ENCODE measurements at regions of chr12 and their contacts with region 1.

Region 1: GRCh38 chr12:49967042-49967776 is 5.5 kb downstream of the AQP5 start:
- DNase-seq: peak; percentile 90 to 99 (median 96)

Region 2: DNA sequence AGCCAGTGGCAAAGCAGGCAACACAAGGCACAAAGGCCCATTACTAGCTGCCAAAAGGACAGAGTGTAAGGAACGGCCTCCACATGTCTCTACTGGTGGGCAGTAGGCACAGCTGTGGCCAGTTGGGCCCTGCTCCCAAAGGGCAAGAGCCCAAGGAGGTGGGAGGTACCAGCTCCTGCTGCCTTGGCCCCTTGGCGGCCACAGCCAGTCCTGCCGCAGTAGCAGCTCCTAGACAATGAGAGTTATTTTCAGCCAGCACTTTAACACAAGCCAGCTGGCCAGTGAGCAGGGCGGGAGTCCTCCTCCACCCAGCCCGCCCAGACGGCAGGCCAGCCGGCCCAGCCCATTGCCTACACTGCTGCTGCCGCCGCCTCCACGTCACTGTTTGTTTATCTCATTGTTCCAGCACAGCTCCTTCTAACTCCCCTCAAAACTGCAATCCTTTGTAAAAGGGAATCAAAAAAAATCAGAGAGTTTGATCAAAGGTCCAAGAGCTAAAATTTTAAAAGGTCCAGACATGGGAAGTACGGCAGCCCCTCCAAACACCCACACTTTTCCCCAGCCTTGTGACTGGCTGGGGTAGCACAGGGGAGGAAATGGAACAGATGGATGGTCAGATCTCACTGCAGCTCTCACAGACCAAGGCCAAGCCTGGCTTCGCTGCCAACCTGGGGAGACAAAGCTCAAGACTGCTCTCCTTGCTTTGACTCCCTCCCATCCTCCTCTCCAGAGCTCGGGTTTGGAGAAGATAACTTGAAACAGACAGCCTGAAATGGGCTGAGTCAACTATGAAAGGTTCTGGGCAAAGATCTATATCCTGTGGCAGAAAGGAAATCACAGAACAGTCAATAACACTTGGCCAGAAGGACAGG is 293.5 kb before region 1 on chr12:
- intact Hi-C with region 1: no loop called
- DNase-seq: peak; percentile 83 to 98 (median 94)

Region 3: DNA sequence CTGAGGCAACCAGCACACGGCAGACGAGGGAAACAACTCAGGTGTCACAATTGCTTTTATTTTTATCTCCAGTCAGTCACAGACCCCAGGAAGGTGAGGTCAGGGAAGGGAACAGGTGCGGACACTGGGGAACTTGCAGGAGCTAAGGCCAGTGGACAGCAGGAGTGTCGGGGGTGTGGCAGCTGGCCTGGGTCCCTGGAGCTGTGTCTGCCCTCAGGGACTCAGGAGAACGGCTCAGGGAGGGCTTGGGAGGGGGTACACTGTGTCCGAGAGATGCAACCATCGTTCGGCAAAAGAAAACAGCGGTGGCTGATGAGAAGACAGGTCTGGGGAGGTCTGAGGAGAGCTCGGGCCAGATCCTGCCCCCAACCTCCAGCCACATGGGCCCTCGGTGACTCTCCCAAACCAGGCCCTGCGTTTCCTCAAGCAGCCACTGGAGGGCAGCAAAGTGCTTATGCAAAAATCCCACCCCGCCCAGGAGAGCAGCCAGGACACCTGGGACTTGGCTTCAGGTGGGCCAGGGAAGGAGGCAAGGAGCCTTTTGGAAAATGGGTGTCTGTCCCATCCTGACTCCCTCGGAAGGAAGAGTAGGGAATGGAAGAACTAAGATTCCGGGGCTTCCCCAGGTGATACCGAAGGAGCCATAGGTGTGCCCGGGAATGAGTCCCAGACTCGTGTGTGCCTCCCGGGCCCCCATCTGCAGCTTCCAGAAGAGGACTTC is 100.2 kb before region 1 on chr12:
- intact Hi-C with region 1: loop called (anchors 5 kb)
- DNase-seq: peak; percentile 61 to 90 (median 80)

Region 4: GRCh38 chr12:49909826-49910225 is 57.4 kb before region 1 on chr12:
- intact Hi-C with region 1: loop called (anchors 5 kb)
- DNase-seq: peak in 31 of 42 donors; percentile 15 to 76 (median 50)

Region 5: GRCh38 chr12:50055831-50056638 is 88.8 kb after region 1 on chr12:
- intact Hi-C with region 1: loop called (anchors 2 kb)
- DNase-seq: peak; percentile 56 to 94 (median 80)

Region 6: GRCh38 chr12:50074936-50075807 is 108.0 kb after region 1 on chr12:
- intact Hi-C with region 1: loop called (anchors 2 kb)
- DNase-seq: peak; percentile 74 to 94 (median 87)

Region 7: GRCh38 chr12:50174971-50175715 is 207.9 kb after region 1 on chr12:
- intact Hi-C with region 1: loop called (anchors 10 kb)
- DNase-seq: peak in 15 of 42 donors; percentile 1 to 75 (median 52)

Measured in head of caudate nucleus (tissue), 42 donors.